Colonic mucosa (tissue), 4 donors: ENCODE measurements at regions of chr2 and their contacts with region 1.

Region 1: GRCh38 chr2:233443468-233444183 is 89.3 kb downstream of the DGKD start:
- DNase-seq: peak; percentile 80
- H3K4me3 ChIP-seq: no peak overlapping the region
- H3K27ac ChIP-seq: no peak overlapping the region
- H3K4me1 ChIP-seq: no peaks in the 10 kb centered on the region
- H3K27me3 ChIP-seq: no peaks in the 10 kb centered on the region
- CTCF ChIP-seq: peak; percentile 72

Region 2: GRCh38 chr2:233288719-233289118 is 154.9 kb before region 1 on chr2:
- intact Hi-C with region 1: loop called (anchors 10 kb)
- DNase-seq: no peak
- H3K4me3 ChIP-seq: no peak overlapping the region
- H3K27ac ChIP-seq: no peak overlapping the region
- H3K4me1 ChIP-seq: no peaks in the 10 kb centered on the region
- H3K27me3 ChIP-seq: no peaks in the 10 kb centered on the region
- CTCF ChIP-seq: no peak

Region 3: GRCh38 chr2:233404222-233404621 is 39.4 kb before region 1 on chr2:
- intact Hi-C with region 1: loop called (anchors 1 kb)
- DNase-seq: peak; percentile 85
- H3K4me3 ChIP-seq: no peak overlapping the region
- H3K27ac ChIP-seq: peak overlapping the region; percentile 14
- H3K4me1 ChIP-seq: peaks cover 7% of the 10 kb centered on the region
- H3K27me3 ChIP-seq: no peaks in the 10 kb centered on the region
- CTCF ChIP-seq: peak; percentile 66

Region 4: GRCh38 chr2:233945146-233945545 is 501.5 kb after region 1 on chr2:
- intact Hi-C with region 1: no loop called
- DNase-seq: no peak
- H3K4me3 ChIP-seq: no peak overlapping the region
- H3K27ac ChIP-seq: no peak overlapping the region
- H3K4me1 ChIP-seq: no peaks in the 10 kb centered on the region
- H3K27me3 ChIP-seq: no peaks in the 10 kb centered on the region
- CTCF ChIP-seq: no peak